ENCODE measurements at regions of chr9 and their contacts with region 1.

Region 1: GRCh38 chr9:27033823-27034403 is 28.4 kb upstream of the LRRC19 start:
- DNase-seq: peak in 1 of 2 donors; percentile 25
- ATAC-seq: peak; percentile 69 to 89 (median 80)
- H3K4me3 ChIP-seq: no peak overlapping the region
- H3K27ac ChIP-seq: no peak overlapping the region
- H3K4me1 ChIP-seq: no peaks in the 10 kb centered on the region
- H3K27me3 ChIP-seq: no peaks in the 10 kb centered on the region
- CTCF ChIP-seq: peak; percentile 85

Region 2: GRCh38 chr9:27019589-27019988 is 14.3 kb before region 1 on chr9:
- intact Hi-C with region 1: loop called in 1 of 2 experiments (anchors 1 kb)
- DNase-seq: no peak
- ATAC-seq: no peak
- H3K4me3 ChIP-seq: no peak overlapping the region
- H3K27ac ChIP-seq: no peak overlapping the region
- H3K4me1 ChIP-seq: no peaks in the 10 kb centered on the region
- H3K27me3 ChIP-seq: no peaks in the 10 kb centered on the region
- CTCF ChIP-seq: no peak

Region 3: GRCh38 chr9:27073841-27074728 is 40.2 kb after region 1 on chr9:
- intact Hi-C with region 1: loop called in 1 of 2 experiments (anchors 2 kb)
- DNase-seq: no peak
- ATAC-seq: no peak
- H3K4me3 ChIP-seq: no peak overlapping the region
- H3K27ac ChIP-seq: no peak overlapping the region
- H3K4me1 ChIP-seq: no peaks in the 10 kb centered on the region
- H3K27me3 ChIP-seq: no peaks in the 10 kb centered on the region
- CTCF ChIP-seq: no peak

Region 4: DNA sequence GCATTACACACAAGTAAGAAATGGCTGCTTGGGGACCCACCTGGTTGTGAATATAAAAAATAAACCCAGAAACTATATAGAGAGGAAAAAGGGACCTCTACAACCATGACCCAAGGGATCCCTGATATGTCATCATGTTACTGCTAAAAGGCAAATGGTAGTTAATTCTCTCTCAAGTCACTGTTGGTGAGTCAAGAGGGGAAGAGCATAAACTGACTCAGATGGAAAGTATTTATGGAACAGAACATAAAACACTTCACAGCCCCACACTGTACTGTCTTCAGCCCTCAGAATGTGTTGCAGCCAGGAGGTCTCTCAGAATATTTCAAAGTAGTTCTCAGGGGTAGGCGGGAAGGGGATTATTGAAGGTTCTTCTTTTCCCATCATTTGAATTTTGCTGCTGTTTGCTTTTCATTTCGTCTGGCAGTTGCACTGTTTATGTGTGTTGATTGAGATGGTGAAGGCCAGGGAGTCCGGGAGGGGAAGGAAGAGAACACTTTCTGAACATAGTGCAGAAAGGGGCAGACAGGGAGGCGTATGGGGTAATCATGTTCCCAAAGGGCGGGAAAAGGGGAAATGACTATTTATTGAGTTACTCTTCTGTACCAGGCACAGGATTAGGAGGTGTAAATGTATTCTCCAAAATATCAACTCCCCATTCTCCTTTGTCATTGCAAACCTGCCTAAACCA is 160.6 kb after region 1 on chr9:
- intact Hi-C with region 1: loop called in 1 of 2 experiments (anchors 5 kb)
- DNase-seq: no peak
- ATAC-seq: peak in 1 of 4 donors; percentile 27
- H3K4me3 ChIP-seq: no peak overlapping the region
- H3K27ac ChIP-seq: no peak overlapping the region
- H3K4me1 ChIP-seq: no peaks in the 10 kb centered on the region
- H3K27me3 ChIP-seq: no peaks in the 10 kb centered on the region
- CTCF ChIP-seq: no peak

Region 5: GRCh38 chr9:27204578-27204977 is 170.7 kb after region 1 on chr9:
- intact Hi-C with region 1: loop called (anchors 5 to 10 kb)
- DNase-seq: no peak
- ATAC-seq: no peak
- H3K4me3 ChIP-seq: no peak overlapping the region
- H3K27ac ChIP-seq: no peak overlapping the region
- H3K4me1 ChIP-seq: no peaks in the 10 kb centered on the region
- H3K27me3 ChIP-seq: no peaks in the 10 kb centered on the region
- CTCF ChIP-seq: no peak

Region 6: GRCh38 chr9:27276193-27277030 is 242.5 kb after region 1 on chr9:
- intact Hi-C with region 1: loop called (anchors 1 to 5 kb)
- DNase-seq: no peak
- ATAC-seq: peak in 3 of 4 donors; percentile 53 to 85 (median 60)
- H3K4me3 ChIP-seq: peak overlapping the region; percentile 44
- H3K27ac ChIP-seq: no peak overlapping the region
- H3K4me1 ChIP-seq: peaks cover 4% of the 10 kb centered on the region
- H3K27me3 ChIP-seq: no peaks in the 10 kb centered on the region
- CTCF ChIP-seq: peak; percentile 84

Measured in psoas muscle (tissue), 8 donors.